Heart left ventricle (tissue), 16 donors: ENCODE measurements at regions of chr4 and their contacts with region 1.

Region 1: GRCh38 chr4:143558823-143559756 is 45.6 kb downstream of the SMARCA5 start:
- DNase-seq: peak; percentile 63 to 80 (median 71)
- ATAC-seq: peak; percentile 82 to 92 (median 88)
- H3K4me3 ChIP-seq: peak overlapping the region; percentile 24 to 73 (median 66)
- H3K27ac ChIP-seq: peak overlapping the region in 10 of 12 donors; percentile 6 to 69 (median 50)
- H3K4me1 ChIP-seq: peaks cover 0 to 15% (median 3%) of the 10 kb centered on the region in 12 donors
- H3K27me3 ChIP-seq: no peaks in the 10 kb centered on the region
- CTCF ChIP-seq: peak; percentile 32 to 85 (median 63)
- POLR2A ChIP-seq: no peak

Region 2: GRCh38 chr4:143224255-143224654 is 334.8 kb before region 1 on chr4:
- intact Hi-C with region 1: no loop called
- DNase-seq: peak in 1 of 5 donors; percentile 9
- ATAC-seq: peak; percentile 55 to 90 (median 66)
- H3K4me3 ChIP-seq: no peak overlapping the region
- H3K27ac ChIP-seq: peak overlapping the region in 5 of 12 donors; percentile 32 to 57 (median 38)
- H3K4me1 ChIP-seq: peaks cover 0 to 27% (median 9%) of the 10 kb centered on the region in 12 donors
- H3K27me3 ChIP-seq: no peaks in the 10 kb centered on the region
- CTCF ChIP-seq: no peak
- POLR2A ChIP-seq: no peak

Region 3: DNA sequence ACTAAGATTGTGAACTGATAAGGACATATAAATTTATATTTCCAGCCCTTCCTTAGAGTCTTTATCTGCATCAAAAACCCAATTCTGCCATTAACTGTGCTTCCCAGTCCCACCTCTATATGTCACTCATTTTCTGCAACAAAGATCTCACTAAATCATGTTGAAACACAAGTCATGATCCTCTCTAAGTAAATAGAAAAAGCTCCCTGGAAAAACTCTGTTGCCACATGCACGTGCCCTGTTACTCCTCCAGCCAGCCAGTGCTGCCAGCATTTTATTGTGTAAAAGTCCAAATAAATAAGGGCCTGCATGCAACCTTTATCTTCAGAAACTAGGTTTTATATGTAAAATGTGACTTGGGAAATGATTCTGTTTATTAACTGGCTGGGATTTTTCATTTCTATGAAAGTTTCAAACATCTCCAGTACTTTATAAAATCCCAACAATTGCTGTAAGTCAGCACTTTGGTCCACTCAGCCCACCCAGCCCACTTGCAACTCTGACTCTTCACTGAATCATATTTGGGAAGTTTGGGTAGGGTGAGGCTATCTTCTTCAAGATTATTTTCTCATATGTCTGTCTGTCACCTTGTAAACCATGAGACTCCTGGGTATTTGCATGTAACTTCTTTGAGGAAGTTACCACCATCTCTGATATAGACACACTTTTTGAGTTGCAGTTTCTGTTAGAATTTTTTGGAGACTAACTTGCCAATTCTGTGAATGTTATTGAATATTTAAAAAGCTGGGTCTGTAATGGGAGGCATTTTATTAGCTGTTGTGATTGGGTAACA is 85.6 kb before region 1 on chr4:
- intact Hi-C with region 1: no loop called
- DNase-seq: no peak
- ATAC-seq: peak in 1 of 4 donors; percentile 17
- H3K4me3 ChIP-seq: no peak overlapping the region
- H3K27ac ChIP-seq: no peak overlapping the region
- H3K4me1 ChIP-seq: no peaks in the 10 kb centered on the region
- H3K27me3 ChIP-seq: no peaks in the 10 kb centered on the region
- CTCF ChIP-seq: no peak
- POLR2A ChIP-seq: no peak

Region 4: GRCh38 chr4:143921181-143921580 is 362.1 kb after region 1 on chr4:
- intact Hi-C with region 1: loop called in 2 of 10 experiments (anchors 10 kb)
- DNase-seq: no peak
- ATAC-seq: no peak
- H3K4me3 ChIP-seq: no peak overlapping the region
- H3K27ac ChIP-seq: no peak overlapping the region
- H3K4me1 ChIP-seq: no peaks in the 10 kb centered on the region
- H3K27me3 ChIP-seq: no peaks in the 10 kb centered on the region
- CTCF ChIP-seq: no peak
- POLR2A ChIP-seq: no peak

Region 5: GRCh38 chr4:144014808-144015207 is 455.7 kb after region 1 on chr4:
- intact Hi-C with region 1: loop called in 1 of 10 experiments (anchors 5 kb)
- DNase-seq: no peak
- ATAC-seq: no peak
- H3K4me3 ChIP-seq: no peak overlapping the region
- H3K27ac ChIP-seq: no peak overlapping the region
- H3K4me1 ChIP-seq: no peaks in the 10 kb centered on the region
- H3K27me3 ChIP-seq: peaks cover 0 to 3% (median 0%) of the 10 kb centered on the region in 9 donors
- CTCF ChIP-seq: no peak
- POLR2A ChIP-seq: no peak